ENCODE measurements at regions of chr10 and their contacts with region 1.

Region 1: GRCh38 chr10:114470956-114471905 is 66.9 kb upstream of the AFAP1L2 start:
- DNase-seq: peak in 9 of 10 donors; percentile 36 to 78 (median 60)
- H3K4me3 ChIP-seq: no peak overlapping the region
- H3K27ac ChIP-seq: peak overlapping the region in 9 of 59 donors; percentile 13 to 50 (median 38)
- H3K27me3 ChIP-seq: no peaks in the 10 kb centered on the region
- CTCF ChIP-seq: peak; percentile 85 to 98 (median 94)

Region 2: GRCh38 chr10:114541081-114541796 is 70.0 kb after region 1 on chr10:
- intact Hi-C with region 1: loop called in 1 of 2 experiments (anchors 5 kb)
- DNase-seq: peak in 2 of 10 donors; percentile 23
- H3K4me3 ChIP-seq: no peak overlapping the region
- H3K27ac ChIP-seq: peak overlapping the region in 19 of 59 donors; percentile 4 to 89 (median 28)
- H3K27me3 ChIP-seq: peaks cover 0 to 12% (median 0%) of the 10 kb centered on the region in 45 donors
- CTCF ChIP-seq: no peak

Region 3: DNA sequence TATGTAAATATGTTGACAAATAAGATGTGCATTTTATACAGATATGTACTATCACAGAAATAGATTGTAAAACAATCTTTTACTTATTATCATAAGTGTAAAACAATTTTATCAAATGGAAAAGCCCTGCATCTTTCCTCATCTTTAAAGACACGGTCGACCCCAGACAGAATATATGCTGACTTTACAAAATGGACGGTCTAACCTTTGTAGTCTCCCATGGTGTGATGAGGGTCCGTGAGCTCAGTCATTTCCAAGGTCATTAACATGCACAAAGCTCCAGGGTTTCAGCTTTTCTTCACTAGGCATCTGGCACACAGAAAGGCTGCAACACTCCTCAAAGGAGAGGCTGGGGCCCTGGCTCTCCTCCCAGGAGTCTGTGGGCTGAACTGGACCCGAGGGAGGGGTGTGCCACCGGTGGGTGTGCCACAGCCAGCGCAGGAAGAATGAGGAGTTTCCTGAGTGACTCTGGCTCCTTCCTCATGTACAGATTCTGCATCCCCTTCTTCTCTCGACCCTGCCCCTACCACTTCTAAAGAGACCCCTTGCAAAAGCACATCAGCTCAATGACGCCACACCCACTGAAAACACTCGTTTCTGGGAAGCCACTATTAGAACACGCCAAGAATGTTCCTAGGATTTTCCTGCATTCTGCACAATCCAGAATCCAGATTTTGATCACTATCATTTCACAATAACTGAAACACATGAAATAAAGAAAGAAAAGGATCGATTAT is 213.0 kb after region 1 on chr10:
- intact Hi-C with region 1: loop called in 1 of 2 experiments (anchors 10 kb)
- DNase-seq: peak in 6 of 10 donors; percentile 34 to 63 (median 48)
- H3K4me3 ChIP-seq: peak overlapping the region in 30 of 59 donors; percentile 1 to 49 (median 22)
- H3K27ac ChIP-seq: peak overlapping the region in 51 of 59 donors; percentile 3 to 85 (median 64)
- H3K27me3 ChIP-seq: peaks cover 0 to 29% (median 0%) of the 10 kb centered on the region in 45 donors
- CTCF ChIP-seq: no peak

Region 4: DNA sequence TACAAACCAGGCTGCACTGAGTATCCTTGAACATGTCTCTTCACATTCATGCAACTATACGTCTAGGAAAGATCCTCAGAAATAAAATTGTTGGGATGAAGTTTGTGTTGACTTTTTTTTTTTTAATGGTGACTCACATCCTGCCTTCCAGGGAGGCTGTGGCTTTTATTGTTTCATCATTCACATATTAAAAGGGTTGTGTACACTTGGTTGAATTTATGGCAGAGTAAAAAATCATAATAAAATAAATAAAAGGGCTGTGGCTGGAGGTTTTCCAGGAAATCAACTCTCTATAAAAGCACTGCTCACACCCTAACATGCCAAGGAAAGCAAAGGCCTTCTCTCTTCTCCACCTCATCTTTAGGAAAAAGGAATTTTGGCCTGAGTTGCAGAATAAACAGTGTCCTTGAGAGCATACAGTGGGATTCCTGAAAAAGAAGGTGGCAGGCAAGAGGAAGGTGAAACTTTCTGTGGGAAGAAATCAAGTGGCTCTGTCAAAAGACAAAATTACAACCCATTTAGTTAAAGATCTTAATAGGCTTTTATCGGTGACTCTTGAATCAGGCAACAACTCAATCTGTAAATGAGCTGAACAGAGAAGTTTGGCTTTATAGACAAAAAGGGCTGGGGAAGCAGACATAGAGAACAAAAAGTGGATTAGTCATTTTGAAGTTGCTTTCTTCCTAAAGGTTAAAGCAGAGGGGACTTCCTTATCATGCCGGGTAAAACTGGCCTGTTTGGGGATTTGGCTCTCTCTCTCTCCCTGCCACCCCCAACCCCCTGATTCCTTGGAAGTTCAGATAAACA is 308.8 kb after region 1 on chr10:
- intact Hi-C with region 1: loop called in 1 of 2 experiments (anchors 5 kb)
- DNase-seq: no peak
- H3K4me3 ChIP-seq: no peak overlapping the region
- H3K27ac ChIP-seq: no peak overlapping the region
- H3K27me3 ChIP-seq: peaks cover 0 to 6% (median 0%) of the 10 kb centered on the region in 45 donors
- CTCF ChIP-seq: no peak

Measured in dorsolateral prefrontal cortex (tissue), 120 donors.